ENCODE measurements at regions of chr7 and their contacts with region 1.

Region 1: GRCh38 chr7:140915935-140916555 is 8.7 kb downstream of the BRAF start:
- DNase-seq: no peak
- H3K4me3 ChIP-seq: no peak overlapping the region
- H3K27ac ChIP-seq: no peak overlapping the region
- H3K4me1 ChIP-seq: peaks cover 33% of the 10 kb centered on the region
- H3K27me3 ChIP-seq: no peaks in the 10 kb centered on the region
- CTCF ChIP-seq: no peak
- POLR2A ChIP-seq: no peak

Region 2: DNA sequence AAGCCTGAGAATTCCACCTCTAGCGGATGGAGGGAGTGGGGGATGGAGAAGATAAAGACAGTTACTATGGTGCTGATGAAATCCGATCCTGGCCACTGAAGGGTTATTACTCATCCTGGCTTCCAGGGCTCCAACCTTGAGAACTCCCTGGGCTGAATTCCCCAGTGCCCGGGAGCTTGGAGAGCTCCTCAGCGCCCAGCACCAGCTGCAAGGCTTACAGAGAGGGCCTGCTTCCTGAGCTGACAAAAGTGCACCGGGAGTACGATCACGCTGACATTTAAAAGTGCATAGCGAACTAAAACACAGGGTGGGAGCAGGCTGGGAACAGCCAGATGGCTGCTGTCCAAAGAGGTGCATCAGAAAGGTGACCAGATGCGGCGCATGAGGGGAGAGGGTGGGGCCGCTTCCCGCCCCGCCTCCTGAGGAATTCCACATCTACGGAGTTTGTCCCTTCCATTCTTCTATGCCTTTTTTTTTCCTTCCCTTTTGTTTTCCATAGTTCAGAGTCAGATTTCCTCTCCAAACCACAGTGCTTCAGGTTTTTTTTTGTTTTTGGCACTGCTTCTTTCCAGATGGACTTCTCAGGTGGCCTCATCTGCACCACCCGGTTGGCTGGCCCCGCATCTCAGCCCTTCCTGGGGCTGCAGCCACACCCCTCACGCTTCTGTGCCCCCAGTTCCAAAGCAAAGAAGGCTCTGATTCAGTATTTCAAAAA is 374.4 kb before region 1 on chr7:
- intact Hi-C with region 1: loop called (anchors 5 kb)
- DNase-seq: no peak
- H3K4me3 ChIP-seq: peak overlapping the region; percentile 12 to 15
- H3K27ac ChIP-seq: peak overlapping the region; percentile 85
- H3K4me1 ChIP-seq: peaks cover 27% of the 10 kb centered on the region
- H3K27me3 ChIP-seq: no peaks in the 10 kb centered on the region
- CTCF ChIP-seq: no peak
- POLR2A ChIP-seq: no peak

Region 3: DNA sequence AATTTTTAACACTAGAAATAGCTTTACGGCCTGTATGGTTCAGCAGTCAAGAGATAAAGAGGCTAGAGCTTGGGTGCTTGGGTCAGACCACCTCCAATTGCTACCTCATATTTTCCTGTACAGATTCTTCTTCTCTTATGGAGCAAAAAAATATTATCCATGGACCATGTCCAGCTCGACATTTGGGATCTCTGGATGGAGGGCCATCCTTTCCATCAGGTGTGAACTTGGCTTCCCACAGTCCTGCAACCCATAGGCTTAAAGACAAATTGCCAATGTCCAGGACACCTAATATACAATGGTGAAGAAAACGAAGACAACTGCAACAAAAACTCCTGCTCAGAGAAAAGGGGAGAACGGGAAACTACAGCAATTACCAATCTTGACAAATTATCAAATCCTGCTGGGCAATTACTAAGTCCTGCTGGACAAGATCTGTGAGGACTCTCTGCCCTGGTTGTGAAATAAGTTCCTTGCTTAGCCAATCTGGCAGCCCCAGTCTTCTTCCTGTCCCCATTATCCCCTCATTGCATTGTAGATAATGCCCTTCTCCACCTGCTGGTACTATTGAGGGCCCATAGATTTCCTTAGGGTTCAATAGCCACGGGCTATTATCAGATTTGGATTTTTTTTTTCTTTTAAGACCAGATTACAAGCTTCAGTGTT is 50.6 kb after region 1 on chr7:
- intact Hi-C with region 1: no loop called
- DNase-seq: no peak
- H3K4me3 ChIP-seq: no peak overlapping the region
- H3K27ac ChIP-seq: no peak overlapping the region
- H3K4me1 ChIP-seq: no peaks in the 10 kb centered on the region
- H3K27me3 ChIP-seq: no peaks in the 10 kb centered on the region
- CTCF ChIP-seq: no peak
- POLR2A ChIP-seq: no peak